ENCODE measurements at regions of chr20 and their contacts with region 1.

Region 1: GRCh38 chr20:16573001-16573965 is at the start of gene KIF16B:
- DNase-seq: peak; percentile 91 to 93
- ATAC-seq: peak; percentile 95 to 98 (median 96)
- H3K4me3 ChIP-seq: peak within 1 kb of the TSS; percentile 71 to 99 (median 92)
- H3K27ac ChIP-seq: peak within 1 kb of the TSS in 9 of 10 donors; percentile 61 to 87 (median 81)
- H3K4me1 ChIP-seq: peaks cover 0 to 53% (median 33%) of the 10 kb centered on the region in 9 donors
- H3K27me3 ChIP-seq: no peaks in the 10 kb centered on the region
- CTCF ChIP-seq: peak in 3 of 9 donors; percentile 10 to 29 (median 18)
- total RNA-seq, gene KIF16B: 14.4 to 22.5 (median 18.2) TPM

Region 2: DNA sequence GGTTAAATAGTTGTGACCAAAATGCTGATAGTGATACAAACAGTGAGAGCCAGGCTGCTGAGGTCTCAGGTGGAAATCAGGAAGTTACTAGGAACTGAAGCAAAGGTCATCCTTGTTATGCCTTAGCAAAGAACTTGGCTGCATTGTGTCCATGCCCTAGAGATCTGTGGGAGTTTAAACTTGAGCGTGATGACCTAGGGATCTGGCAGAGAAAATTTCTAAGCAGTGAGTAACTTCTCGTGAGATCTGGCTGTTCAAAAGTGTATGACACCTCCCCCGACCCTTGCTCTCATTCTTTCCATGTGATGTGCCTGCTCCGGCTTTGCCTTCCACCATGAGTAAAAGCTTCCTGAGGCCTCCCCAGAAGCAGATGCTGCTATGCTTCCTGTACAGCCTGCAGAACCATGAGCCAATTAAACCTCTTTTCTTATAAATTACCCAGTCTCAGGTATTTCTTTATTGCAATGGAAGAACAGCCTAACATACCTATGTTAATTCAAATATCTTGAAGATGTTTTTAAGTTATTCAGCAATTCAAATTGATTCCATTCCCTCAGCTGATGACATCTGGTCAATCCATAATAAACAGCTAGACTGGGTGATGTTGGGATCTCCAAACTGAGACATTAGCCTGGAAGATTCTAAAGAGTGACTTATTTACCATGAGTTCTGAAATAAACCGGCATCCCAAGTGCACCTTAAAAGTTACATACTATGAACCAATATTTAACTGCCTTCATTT is 33.8 kb before region 1 on chr20:
- intact Hi-C with region 1: loop called in 1 of 10 experiments (anchors 5 kb)
- DNase-seq: no peak
- ATAC-seq: no peak
- H3K4me3 ChIP-seq: no peak overlapping the region
- H3K27ac ChIP-seq: no peak overlapping the region
- H3K4me1 ChIP-seq: peaks cover 0 to 42% (median 15%) of the 10 kb centered on the region in 9 donors
- H3K27me3 ChIP-seq: no peaks in the 10 kb centered on the region
- CTCF ChIP-seq: no peak

Region 3: DNA sequence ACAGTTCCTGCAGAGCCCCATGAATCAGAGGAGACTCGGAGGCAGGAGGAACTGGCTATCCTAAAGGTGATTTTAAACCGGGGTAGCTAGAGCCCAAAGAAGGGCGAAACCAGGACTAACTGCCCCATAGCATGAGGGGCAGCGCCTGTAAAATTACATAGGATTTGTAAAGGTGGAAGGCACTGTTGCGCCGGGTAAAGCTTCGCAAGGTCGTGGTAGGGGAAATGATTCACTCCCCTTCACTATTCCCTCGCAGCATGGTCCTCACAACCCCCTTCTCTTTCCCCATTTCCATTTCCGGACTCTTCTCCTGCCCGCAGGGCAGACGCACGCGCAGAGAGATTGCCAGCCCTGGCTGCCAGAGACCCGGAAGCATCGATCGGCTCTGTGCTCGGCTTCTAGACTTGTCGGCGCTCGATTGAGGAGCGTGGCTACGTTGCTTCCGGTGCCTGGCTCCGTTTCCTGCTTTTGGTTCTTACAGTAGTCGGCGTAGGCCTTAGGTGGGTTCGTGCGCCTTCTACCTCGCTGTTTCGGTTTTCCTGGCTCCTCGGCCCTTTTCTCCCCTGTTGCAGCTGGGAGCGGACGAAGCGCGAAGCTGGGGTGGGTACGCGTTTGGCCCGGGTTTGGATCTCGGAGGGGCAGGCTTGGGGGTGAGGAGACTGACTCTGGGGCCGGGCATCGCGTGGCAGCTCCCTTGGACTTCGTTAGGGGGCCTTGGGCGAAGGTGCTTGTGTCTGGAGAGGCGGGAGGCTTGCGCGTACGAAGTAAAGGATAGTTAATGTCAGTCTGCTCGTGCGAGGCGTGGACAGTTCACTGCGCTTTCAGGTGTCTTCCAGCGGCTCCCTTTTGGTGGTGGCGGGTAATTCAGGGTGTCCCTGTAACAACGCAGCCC is 156.5 kb after region 1 on chr20 and contains the start of gene SNRPB2:
- intact Hi-C with region 1: loop called in 4 of 10 experiments (anchors 5 to 10 kb)
- DNase-seq: peak; percentile 90 to 94
- ATAC-seq: peak; percentile 98 to 100 (median 99)
- H3K4me3 ChIP-seq: peak within 1 kb of the TSS; percentile 75 to 97 (median 92)
- H3K27ac ChIP-seq: peak within 1 kb of the TSS; percentile 24 to 95 (median 81)
- H3K4me1 ChIP-seq: peaks cover 0 to 26% (median 14%) of the 10 kb centered on the region in 9 donors
- H3K27me3 ChIP-seq: peaks cover 0 to 39% (median 24%) of the 10 kb centered on the region in 7 donors
- CTCF ChIP-seq: peak in 2 of 9 donors; percentile 4 to 8
- total RNA-seq, gene SNRPB2: 28.8 to 40.3 (median 32.2) TPM